ENCODE measurements at regions of chrX and their contacts with region 1.

Region 1: GRCh38 chrX:51802917-51803688 is 59.9 kb downstream of the GSPT2 start:
- DNase-seq: peak; percentile 84
- H3K4me3 Mint-ChIP-seq: peak overlapping the region; percentile 100
- H3K27ac Mint-ChIP-seq: peak overlapping the region; percentile 99
- H3K4me1 Mint-ChIP-seq: peaks cover 10% of the 10 kb centered on the region
- H3K27me3 Mint-ChIP-seq: no peaks in the 10 kb centered on the region

Region 2: DNA sequence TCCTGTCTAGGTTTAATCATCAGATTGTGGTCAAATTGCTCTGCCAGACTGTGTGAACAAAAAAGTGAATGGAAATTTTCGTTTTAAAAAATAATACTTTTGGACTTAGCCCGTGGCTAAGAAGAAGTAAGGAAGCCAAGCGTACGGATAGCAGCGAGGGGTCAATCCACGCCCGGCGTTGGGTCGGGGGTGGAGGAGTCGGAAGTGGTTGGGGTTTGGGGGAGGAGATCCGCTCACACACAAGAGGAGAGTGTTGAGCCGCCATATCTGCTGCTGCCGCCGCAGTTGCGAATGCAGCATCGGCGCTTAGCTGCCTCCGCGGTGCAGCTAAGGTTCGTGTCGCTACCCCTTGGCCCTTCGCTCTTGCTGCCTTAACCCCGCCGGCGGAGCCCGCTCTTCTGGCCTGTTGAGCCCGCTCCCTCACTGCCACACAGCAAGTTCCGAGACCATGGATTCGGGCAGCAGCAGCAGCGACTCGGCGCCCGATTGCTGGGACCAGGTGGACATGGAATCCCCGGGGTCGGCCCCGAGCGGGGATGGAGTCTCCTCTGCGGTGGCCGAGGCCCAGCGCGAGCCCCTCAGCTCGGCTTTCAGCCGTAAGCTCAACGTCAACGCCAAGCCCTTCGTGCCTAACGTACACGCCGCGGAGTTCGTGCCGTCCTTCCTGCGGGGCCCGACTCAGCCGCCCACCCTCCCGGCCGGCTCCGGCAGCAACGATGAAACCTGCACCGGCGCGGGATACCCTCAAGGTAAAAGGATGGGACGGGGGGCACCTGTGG is 59.7 kb before region 1 on chrX and contains the start of gene GSPT2:
- intact Hi-C with region 1: loop called (anchors 1 kb)
- DNase-seq: peak; percentile 89
- H3K4me3 Mint-ChIP-seq: peak within 1 kb of the TSS; percentile 94
- H3K27ac Mint-ChIP-seq: peak within 1 kb of the TSS; percentile 91
- H3K4me1 Mint-ChIP-seq: peaks cover 17% of the 10 kb centered on the region
- H3K27me3 Mint-ChIP-seq: peaks cover 3% of the 10 kb centered on the region
- total RNA-seq, gene GSPT2: 12.8 and 13.2 TPM in 2 replicates